Vagina (tissue), 2 donors: ENCODE measurements at regions of chr15 and their contacts with region 1.

Region 1: GRCh38 chr15:91271565-91272153 is 171.6 kb downstream of the SV2B start:
- DNase-seq: no peak
- H3K4me3 ChIP-seq: no peak overlapping the region
- H3K27ac ChIP-seq: no peak overlapping the region
- H3K4me1 ChIP-seq: no peaks in the 10 kb centered on the region
- H3K27me3 ChIP-seq: no peaks in the 10 kb centered on the region
- CTCF ChIP-seq: peak; percentile 70 to 80 (median 70)
- POLR2A ChIP-seq: no peak

Region 2: GRCh38 chr15:90946538-90946937 is 325.1 kb before region 1 on chr15:
- intact Hi-C with region 1: loop called (anchors 10 kb)
- DNase-seq: no peak
- H3K4me3 ChIP-seq: no peak overlapping the region
- H3K27ac ChIP-seq: no peak overlapping the region
- H3K4me1 ChIP-seq: no peaks in the 10 kb centered on the region
- H3K27me3 ChIP-seq: no peaks in the 10 kb centered on the region
- CTCF ChIP-seq: no peak
- POLR2A ChIP-seq: no peak

Region 3: DNA sequence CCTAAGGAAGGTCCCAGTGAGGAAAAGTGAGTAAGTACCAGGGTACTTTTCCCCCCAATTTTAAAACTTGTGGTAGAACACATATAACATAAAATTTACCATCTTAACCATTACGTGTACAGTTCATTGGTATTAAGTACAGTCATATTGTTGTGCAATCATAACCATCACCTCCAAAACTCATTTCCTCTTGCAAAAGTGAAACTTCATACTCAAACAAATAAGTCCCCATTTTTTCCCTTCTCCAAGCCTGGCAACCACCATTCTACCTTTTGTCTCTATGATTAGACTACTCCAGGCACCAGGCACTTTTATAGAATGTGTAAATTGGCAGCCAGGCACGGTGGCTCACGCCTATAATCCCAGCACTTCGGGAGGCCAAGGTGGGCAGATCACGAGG is 289.5 kb before region 1 on chr15:
- intact Hi-C with region 1: no loop called
- DNase-seq: no peak
- H3K4me3 ChIP-seq: no peak overlapping the region
- H3K27ac ChIP-seq: no peak overlapping the region
- H3K4me1 ChIP-seq: no peaks in the 10 kb centered on the region
- H3K27me3 ChIP-seq: no peaks in the 10 kb centered on the region
- CTCF ChIP-seq: no peak
- POLR2A ChIP-seq: no peak

Region 4: GRCh38 chr15:91055548-91056331 is 215.9 kb before region 1 on chr15:
- intact Hi-C with region 1: loop called (anchors 5 kb)
- DNase-seq: peak in 1 of 2 donors; percentile 64
- H3K4me3 ChIP-seq: no peak overlapping the region
- H3K27ac ChIP-seq: no peak overlapping the region
- H3K4me1 ChIP-seq: no peaks in the 10 kb centered on the region
- H3K27me3 ChIP-seq: no peaks in the 10 kb centered on the region
- CTCF ChIP-seq: peak; percentile 46 to 60 (median 52)
- POLR2A ChIP-seq: no peak

Region 5: DNA sequence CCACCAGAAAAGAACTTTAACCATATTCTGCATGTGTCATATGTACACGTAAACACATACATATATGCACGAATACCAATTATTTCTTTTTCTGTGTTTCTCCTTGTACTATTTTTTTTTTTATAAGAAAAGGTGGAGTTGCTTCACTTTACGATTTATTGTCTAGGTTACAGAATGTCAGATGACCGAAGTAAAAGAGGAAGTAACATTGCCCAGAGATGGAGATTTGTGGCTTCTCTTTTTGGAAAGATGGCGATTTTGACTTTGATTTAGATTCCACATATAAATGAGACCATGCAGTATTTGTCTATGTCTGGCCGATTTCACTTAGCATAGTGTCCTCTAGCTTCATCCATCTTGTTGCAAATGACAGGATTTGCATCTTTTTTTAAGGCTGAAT is 121.5 kb after region 1 on chr15:
- intact Hi-C with region 1: no loop called
- DNase-seq: no peak
- H3K4me3 ChIP-seq: no peak overlapping the region
- H3K27ac ChIP-seq: no peak overlapping the region
- H3K4me1 ChIP-seq: no peaks in the 10 kb centered on the region
- H3K27me3 ChIP-seq: no peaks in the 10 kb centered on the region
- CTCF ChIP-seq: no peak
- POLR2A ChIP-seq: no peak